ENCODE measurements at regions of chr12 and their contacts with region 1.

Region 1: GRCh38 chr12:86530996-86531655 is 274.9 kb upstream of the MGAT4C start:
- DNase-seq: no peak
- H3K4me3 Mint-ChIP-seq: no peak overlapping the region
- H3K27ac Mint-ChIP-seq: no peak overlapping the region
- H3K4me1 Mint-ChIP-seq: no peaks in the 10 kb centered on the region
- H3K27me3 Mint-ChIP-seq: no peaks in the 10 kb centered on the region

Region 2: GRCh38 chr12:85627584-85627983 is 903.5 kb before region 1 on chr12:
- CTCF ChIA-PET with region 1: no interaction called
- POLR2A ChIA-PET with region 1: no interaction called
- DNase-seq: no peak
- H3K4me3 Mint-ChIP-seq: no peak overlapping the region
- H3K27ac Mint-ChIP-seq: no peak overlapping the region
- H3K4me1 Mint-ChIP-seq: no peaks in the 10 kb centered on the region
- H3K27me3 Mint-ChIP-seq: no peaks in the 10 kb centered on the region

Region 3: GRCh38 chr12:86565030-86565429 is 33.9 kb after region 1 on chr12:
- CTCF ChIA-PET with region 1: no interaction called
- POLR2A ChIA-PET with region 1: no interaction called
- DNase-seq: no peak
- H3K4me3 Mint-ChIP-seq: no peak overlapping the region
- H3K27ac Mint-ChIP-seq: no peak overlapping the region
- H3K4me1 Mint-ChIP-seq: no peaks in the 10 kb centered on the region
- H3K27me3 Mint-ChIP-seq: no peaks in the 10 kb centered on the region

Region 4: DNA sequence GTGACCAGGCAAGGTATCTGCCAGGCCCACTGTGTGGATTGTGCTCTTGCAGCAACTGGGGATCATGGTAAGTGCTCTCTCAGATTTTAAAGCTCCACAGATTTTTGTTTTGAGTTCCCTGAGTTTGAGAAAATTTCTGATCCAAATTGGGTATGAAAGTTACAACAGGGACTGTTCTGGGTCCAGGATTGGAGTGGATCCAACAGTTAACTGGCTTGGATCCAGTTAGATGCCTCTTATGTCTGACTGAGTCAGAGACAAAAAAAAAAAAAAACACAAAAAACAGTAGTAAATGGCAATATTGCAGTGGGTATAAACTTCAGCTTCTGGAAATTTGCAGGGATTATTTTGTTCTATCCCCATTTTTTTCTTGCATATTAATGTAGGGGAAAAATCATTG is 899.3 kb after region 1 on chr12:
- CTCF ChIA-PET with region 1: no interaction called
- POLR2A ChIA-PET with region 1: interaction called, 12 read pairs
- DNase-seq: no peak
- H3K4me3 Mint-ChIP-seq: no peak overlapping the region
- H3K27ac Mint-ChIP-seq: no peak overlapping the region
- H3K4me1 Mint-ChIP-seq: no peaks in the 10 kb centered on the region
- H3K27me3 Mint-ChIP-seq: no peaks in the 10 kb centered on the region